HEK293 (cell line): ENCODE measurements at regions of chr11 and their contacts with region 1.

Region 1: DNA sequence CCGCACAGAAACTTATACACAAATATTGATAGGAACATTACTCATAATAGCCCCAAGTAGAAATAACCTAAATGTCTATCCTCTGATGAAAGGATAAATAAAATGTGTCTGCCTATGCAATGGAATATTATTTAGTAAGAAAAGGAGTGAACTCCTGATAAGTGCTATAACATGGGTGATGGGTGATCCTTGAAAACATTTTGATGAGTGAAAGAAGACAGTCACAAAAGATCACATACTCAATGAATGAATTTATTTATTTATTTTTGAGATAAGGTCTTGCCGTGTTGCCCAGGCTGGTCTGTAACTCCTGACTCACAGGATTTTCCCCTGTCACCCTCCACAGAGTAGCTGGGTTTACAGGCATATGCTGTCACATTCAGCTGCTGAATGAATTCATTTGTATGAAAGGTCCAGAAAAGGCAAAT is 17.3 kb downstream of the RNF121 start:
- H3K4me3 ChIP-seq: no peak overlapping the region
- H3K27ac ChIP-seq: no peak overlapping the region
- H3K4me1 ChIP-seq: 0 out of 2 replicates have a peak, but pooled peaks cover 8% of the 10 kb centered on the region
- CTCF ChIP-seq: no peak

Region 2: DNA sequence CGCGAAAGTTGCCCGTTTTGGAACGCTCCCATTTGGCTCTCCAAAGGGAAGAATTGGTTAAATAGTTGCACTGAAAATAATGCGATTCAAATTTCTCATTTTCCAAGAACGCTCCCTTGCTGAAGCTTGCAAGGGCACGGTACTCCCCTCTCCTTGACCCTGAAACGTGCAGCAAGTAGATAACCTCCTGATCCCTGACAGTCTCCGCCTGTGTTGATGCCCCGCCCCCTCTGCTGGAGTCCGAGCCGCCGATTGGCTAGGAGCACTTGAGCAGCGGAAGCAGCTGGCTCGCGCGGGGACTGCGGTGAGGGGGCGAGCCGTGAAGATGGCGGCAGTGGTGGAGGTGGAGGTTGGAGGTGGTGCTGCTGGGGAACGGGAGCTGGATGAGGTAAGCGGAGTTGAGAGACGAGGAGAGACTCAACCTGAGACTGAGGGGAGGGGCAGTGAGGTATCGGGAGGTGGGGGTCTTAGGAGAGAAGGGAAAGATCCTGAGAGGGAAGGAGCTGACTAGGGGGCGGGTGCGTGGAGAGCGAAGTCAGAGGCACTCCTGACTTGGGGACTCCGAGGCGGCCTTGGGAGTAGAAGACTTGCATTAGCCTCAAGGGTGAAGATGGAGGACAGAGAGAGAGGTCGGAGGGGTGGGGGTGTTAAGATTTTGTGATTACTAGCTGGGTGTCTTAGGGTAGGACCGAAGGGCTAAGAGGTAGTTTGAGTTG is 17.3 kb before region 1 on chr11 and contains the start of gene RNF121:
- CTCF ChIA-PET with region 1: interaction called, 4 read pairs
- POLR2A ChIA-PET with region 1: interaction called, 32 read pairs
- H3K4me3 ChIP-seq: peak within 1 kb of the TSS; percentile 89
- H3K27ac ChIP-seq: peak within 1 kb of the TSS; percentile 84
- H3K4me1 ChIP-seq: no peaks in the 10 kb centered on the region
- CTCF ChIP-seq: peak; percentile 18; the same call in 1 of the 2 replicates

Region 3: GRCh38 chr11:71935338-71935925 is 10.7 kb before region 1 on chr11:
- CTCF ChIA-PET with region 1: no interaction called
- POLR2A ChIA-PET with region 1: interaction called, 32 read pairs
- H3K4me3 ChIP-seq: no peak overlapping the region
- H3K27ac ChIP-seq: no peak overlapping the region
- H3K4me1 ChIP-seq: peaks cover 6% of the 10 kb centered on the region
- CTCF ChIP-seq: no peak